ENCODE measurements at regions of chr13 and their contacts with region 1.

Region 1: GRCh38 chr13:114110091-114110829 is 22.2 kb downstream of the RASA3 start:
- DNase-seq: peak; percentile 89
- ATAC-seq: peak; percentile 94
- H3K4me3 Mint-ChIP-seq: peak overlapping the region; percentile 62
- H3K27ac Mint-ChIP-seq: peak overlapping the region; percentile 96
- H3K4me1 Mint-ChIP-seq: peaks cover 53% of the 10 kb centered on the region
- H3K27me3 Mint-ChIP-seq: no peaks in the 10 kb centered on the region

Region 2: GRCh38 chr13:113597391-113598085 is 512.7 kb before region 1 on chr13:
- CTCF ChIA-PET with region 1: no interaction called
- DNase-seq: no peak
- ATAC-seq: no peak
- H3K4me3 Mint-ChIP-seq: no peak overlapping the region
- H3K27ac Mint-ChIP-seq: no peak overlapping the region
- H3K4me1 Mint-ChIP-seq: peaks cover 14% of the 10 kb centered on the region
- H3K27me3 Mint-ChIP-seq: no peaks in the 10 kb centered on the region

Region 3: GRCh38 chr13:114065141-114065925 is 44.9 kb before region 1 on chr13:
- CTCF ChIA-PET with region 1: interaction called, 11 read pairs
- DNase-seq: peak; percentile 86
- ATAC-seq: peak; percentile 83
- H3K4me3 Mint-ChIP-seq: peak overlapping the region; percentile 58
- H3K27ac Mint-ChIP-seq: peak overlapping the region; percentile 89
- H3K4me1 Mint-ChIP-seq: peaks cover 52% of the 10 kb centered on the region
- H3K27me3 Mint-ChIP-seq: no peaks in the 10 kb centered on the region

Region 4: GRCh38 chr13:114226699-114227323 is 116.6 kb after region 1 on chr13:
- CTCF ChIA-PET with region 1: interaction called, 25 read pairs
- DNase-seq: peak; percentile 88
- ATAC-seq: peak; percentile 92
- H3K4me3 Mint-ChIP-seq: no peak overlapping the region
- H3K27ac Mint-ChIP-seq: no peak overlapping the region
- H3K4me1 Mint-ChIP-seq: peaks cover 18% of the 10 kb centered on the region
- H3K27me3 Mint-ChIP-seq: peaks cover 15% of the 10 kb centered on the region

Measured in activated CD8-positive, alpha-beta memory T cell treated with anti-CD3 and anti-CD28 coated beads, Interleukin-2, amount 10 ng/mL, durations not matched to agents 7 days and 5 days (primary cell).